Activated CD4-positive, alpha-beta memory T cell treated with anti-CD3 and anti-CD28 coated beads for 36 hours (primary cell): ENCODE measurements at regions of chr14 and their contacts with region 1.

Region 1: DNA sequence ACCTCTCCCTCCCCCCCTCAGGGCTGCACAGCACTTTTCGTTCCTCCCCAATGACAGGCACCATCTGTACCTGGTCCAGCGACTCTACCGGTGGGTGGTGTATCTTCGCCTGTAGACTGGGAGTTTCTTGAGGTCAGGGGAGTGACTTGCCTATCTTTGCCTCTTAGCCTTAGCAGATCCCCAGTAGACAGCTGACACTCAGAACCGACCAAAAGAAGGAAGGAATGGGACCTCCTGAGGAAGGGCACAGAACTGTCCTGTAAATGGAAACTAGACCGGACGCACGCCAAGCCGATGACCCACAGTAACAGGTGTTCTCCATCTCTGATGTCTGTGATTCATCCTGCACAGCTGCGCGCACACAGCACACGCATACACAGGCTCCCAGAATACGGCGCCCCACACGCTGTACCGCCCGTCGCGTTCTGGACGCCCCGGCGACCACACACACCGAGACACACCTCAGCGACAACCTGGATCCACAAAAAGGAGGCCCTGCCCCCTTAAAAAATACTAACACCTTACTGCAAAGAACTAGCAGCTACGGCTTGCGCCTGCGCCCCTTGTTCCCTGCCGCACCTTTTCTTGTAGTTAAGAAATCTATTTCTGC is 673 bp upstream of the TTC9 start:
- DNase-seq: peak; percentile 79
- H3K4me3 Mint-ChIP-seq: peak overlapping the region; percentile 89
- H3K27ac Mint-ChIP-seq: peak overlapping the region; percentile 92
- H3K4me1 Mint-ChIP-seq: peaks cover 44% of the 10 kb centered on the region
- H3K27me3 Mint-ChIP-seq: no peaks in the 10 kb centered on the region

Region 2: GRCh38 chr14:70527501-70528105 is 113.4 kb before region 1 on chr14:
- CTCF ChIA-PET with region 1: no interaction called
- POLR2A ChIA-PET with region 1: no interaction called
- intact Hi-C with region 1: no loop called
- DNase-seq: no peak
- H3K4me3 Mint-ChIP-seq: no peak overlapping the region
- H3K27ac Mint-ChIP-seq: no peak overlapping the region
- H3K4me1 Mint-ChIP-seq: no peaks in the 10 kb centered on the region
- H3K27me3 Mint-ChIP-seq: no peaks in the 10 kb centered on the region

Region 3: GRCh38 chr14:70655110-70655826 is 14.2 kb after region 1 on chr14:
- CTCF ChIA-PET with region 1: interaction called, 9 read pairs
- POLR2A ChIA-PET with region 1: interaction called, 36 read pairs
- intact Hi-C with region 1: loop called (anchors 1 kb)
- DNase-seq: peak; percentile 87
- H3K4me3 Mint-ChIP-seq: peak overlapping the region; percentile 84
- H3K27ac Mint-ChIP-seq: peak overlapping the region; percentile 99
- H3K4me1 Mint-ChIP-seq: peaks cover 86% of the 10 kb centered on the region
- H3K27me3 Mint-ChIP-seq: no peaks in the 10 kb centered on the region

Region 4: DNA sequence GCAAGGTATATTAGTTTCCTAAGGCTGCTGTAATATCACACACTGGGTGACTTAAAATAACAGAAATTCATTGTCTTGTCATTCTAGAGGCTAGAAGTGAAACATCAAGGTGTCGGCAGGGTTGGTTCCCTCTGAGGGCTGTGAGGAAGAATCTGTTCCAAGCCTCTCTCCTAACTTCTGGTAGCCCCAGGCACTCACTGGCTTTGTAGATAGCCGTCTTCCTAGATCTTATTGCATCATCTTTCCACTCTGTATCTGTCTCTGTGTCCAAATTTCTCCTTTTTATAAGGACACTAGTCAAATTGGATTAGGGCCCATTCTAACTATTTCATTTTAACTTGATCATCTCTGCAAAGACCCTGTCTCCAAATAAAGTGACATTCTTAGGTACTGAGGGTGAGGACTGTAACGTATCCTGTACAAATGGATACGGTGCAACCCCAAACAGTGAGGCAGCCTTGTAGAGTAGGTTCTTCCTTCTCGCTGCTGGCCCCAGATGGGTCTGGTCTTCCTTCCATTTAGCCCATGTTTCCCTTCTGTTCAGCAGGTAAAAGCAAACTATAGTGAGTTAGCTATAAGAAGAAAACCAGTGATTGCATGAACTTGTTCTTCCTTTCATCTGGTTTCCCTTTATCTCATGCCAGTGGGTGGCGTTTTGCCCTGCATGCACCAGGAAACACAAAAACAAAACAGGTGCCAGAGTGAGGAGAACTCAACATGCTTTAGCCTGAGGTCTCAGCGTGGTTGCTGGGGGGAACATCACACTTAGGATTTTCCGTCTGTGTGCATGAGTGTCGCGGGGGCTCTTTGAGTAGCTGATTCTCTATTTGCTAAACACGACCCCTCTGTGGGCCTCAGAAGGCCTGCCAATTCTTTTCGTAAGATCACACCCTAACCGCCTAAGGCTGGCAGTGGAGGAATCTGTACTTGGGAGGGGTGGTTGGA is 20.2 kb after region 1 on chr14:
- CTCF ChIA-PET with region 1: interaction called, 8 read pairs
- POLR2A ChIA-PET with region 1: interaction called, 36 read pairs
- intact Hi-C with region 1: no loop called
- DNase-seq: peak; percentile 71
- H3K4me3 Mint-ChIP-seq: peak overlapping the region; percentile 45
- H3K27ac Mint-ChIP-seq: peak overlapping the region; percentile 83
- H3K4me1 Mint-ChIP-seq: peaks cover 82% of the 10 kb centered on the region
- H3K27me3 Mint-ChIP-seq: no peaks in the 10 kb centered on the region

Region 5: DNA sequence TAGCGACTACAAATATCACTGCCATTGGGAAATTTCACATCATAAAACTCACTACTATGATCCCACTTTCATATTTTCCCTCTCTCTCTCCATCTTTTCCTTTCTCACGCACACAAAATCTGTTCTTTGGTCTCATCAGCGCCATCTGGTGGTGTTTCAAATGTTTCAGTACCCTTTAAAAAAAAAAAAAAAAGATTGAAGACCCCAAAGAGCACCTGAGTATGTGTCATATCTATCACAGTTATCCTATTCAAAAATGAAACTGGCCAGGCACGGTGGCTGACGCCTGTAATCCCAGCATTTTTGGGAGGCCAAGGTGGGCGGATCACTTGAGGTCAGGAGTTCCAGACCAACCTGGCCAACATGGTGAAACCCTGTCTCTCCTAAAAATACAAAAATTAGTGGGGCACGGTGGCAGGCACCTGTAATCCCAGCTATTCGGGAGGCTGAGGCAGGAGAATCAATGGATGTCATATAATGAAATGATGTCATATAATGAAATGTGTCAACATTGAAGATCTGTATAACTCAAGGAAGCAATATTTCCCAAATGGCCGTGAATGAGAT is 73.1 kb after region 1 on chr14:
- CTCF ChIA-PET with region 1: interaction called, 5 read pairs
- POLR2A ChIA-PET with region 1: interaction called, 3 read pairs
- intact Hi-C with region 1: loop called (anchors 5 kb)
- DNase-seq: peak; percentile 32
- H3K4me3 Mint-ChIP-seq: no peak overlapping the region
- H3K27ac Mint-ChIP-seq: no peak overlapping the region
- H3K4me1 Mint-ChIP-seq: peaks cover 3% of the 10 kb centered on the region
- H3K27me3 Mint-ChIP-seq: no peaks in the 10 kb centered on the region

Region 6: GRCh38 chr14:70796551-70796950 is 155.5 kb after region 1 on chr14:
- CTCF ChIA-PET with region 1: no interaction called
- POLR2A ChIA-PET with region 1: no interaction called
- intact Hi-C with region 1: no loop called
- DNase-seq: no peak
- H3K4me3 Mint-ChIP-seq: no peak overlapping the region
- H3K27ac Mint-ChIP-seq: no peak overlapping the region
- H3K4me1 Mint-ChIP-seq: no peaks in the 10 kb centered on the region
- H3K27me3 Mint-ChIP-seq: no peaks in the 10 kb centered on the region

Region 7: DNA sequence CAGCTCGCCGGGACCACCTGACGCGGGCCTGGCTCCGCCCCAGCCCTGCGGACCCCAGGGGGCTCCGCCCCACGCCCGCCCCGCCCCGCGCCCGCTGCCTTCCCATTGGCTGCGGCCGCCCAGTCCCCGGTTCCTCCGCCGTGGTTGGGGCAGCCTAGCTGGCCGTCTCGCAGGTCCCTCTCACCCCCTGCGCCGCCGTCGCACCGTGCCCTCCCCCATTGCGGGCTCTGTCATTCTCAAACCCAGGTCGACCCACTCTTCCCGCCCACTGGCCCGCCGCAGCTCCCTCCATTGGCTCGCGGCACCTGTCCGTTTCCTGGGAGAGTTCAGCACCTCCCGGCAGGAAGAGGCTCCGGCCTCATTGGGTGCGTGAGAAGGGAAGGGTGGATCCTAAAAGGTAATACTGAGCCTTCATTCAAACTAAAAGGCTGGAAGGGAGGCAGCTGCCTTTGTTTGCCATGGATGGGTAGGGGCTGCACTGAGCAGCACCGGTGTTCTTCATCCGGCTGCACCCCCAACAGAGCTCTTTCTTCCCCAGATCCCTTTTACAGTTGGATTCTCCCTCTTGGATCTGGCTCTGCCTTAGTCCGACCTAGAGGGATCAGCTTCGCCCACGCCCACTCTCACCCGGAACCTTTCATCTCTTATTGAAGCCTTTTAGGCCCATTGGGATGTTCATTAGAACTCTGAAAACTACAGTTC is 168.7 kb after region 1 on chr14:
- CTCF ChIA-PET with region 1: no interaction called
- POLR2A ChIA-PET with region 1: interaction called, 10 read pairs
- intact Hi-C with region 1: loop called (anchors 2 kb)
- DNase-seq: peak; percentile 96
- H3K4me3 Mint-ChIP-seq: no peak overlapping the region
- H3K27ac Mint-ChIP-seq: no peak overlapping the region
- H3K4me1 Mint-ChIP-seq: peaks cover 6% of the 10 kb centered on the region
- H3K27me3 Mint-ChIP-seq: no peaks in the 10 kb centered on the region